ENCODE measurements at regions of chr6 and their contacts with region 1.

Region 1: DNA sequence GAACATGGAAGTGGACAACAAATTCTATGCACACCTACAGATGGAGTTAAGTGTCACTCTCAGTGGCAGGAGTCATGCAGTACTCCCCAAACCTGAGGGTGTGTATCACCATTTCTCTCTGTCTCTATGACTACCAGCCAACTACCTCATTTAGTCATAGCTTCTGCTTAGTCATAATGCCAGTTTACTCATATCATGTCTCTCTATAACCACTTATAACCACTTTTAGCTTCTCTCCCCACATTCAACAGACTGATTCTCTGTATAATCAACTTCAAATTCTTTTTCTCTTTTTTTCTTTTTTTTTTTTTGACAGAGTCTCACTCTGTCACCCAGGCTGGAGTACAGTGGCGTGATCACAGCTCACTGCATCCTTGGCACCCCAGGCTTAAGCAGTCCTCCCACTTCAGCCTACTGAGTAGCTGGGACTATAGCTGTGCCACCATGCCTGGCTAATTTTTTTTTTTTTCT is 13.8 kb upstream of the GTF3C6 start:
- DNase-seq: no peak
- ATAC-seq: peak; percentile 12

Region 2: GRCh38 chr6:110140650-110141049 is 804.1 kb before region 1 on chr6:
- intact Hi-C with region 1: no loop called
- DNase-seq: no peak
- ATAC-seq: no peak

Region 3: GRCh38 chr6:110682460-110682853 is 262.3 kb before region 1 on chr6:
- intact Hi-C with region 1: loop called (anchors 5 kb)
- DNase-seq: no peak
- ATAC-seq: peak; percentile 98

Region 4: GRCh38 chr6:111259089-111259831 is 314.5 kb after region 1 on chr6:
- intact Hi-C with region 1: no loop called
- DNase-seq: peak; percentile 99
- ATAC-seq: peak; percentile 99

Measured in Right ventricle myocardium superior (tissue), 1 donor.